ENCODE measurements at regions of chr1 and their contacts with region 1.

Region 1: GRCh38 chr1:25997828-25998761 is at the start of gene PAFAH2:
- DNase-seq: peak; percentile 99
- ATAC-seq: peak; percentile 98
- H3K4me3 ChIP-seq: peak within 1 kb of the TSS; percentile 65 to 90 (median 83)
- H3K4me3 Mint-ChIP-seq: peak within 1 kb of the TSS; percentile 95
- H3K27ac ChIP-seq: peak within 1 kb of the TSS; percentile 77 to 91
- H3K27ac Mint-ChIP-seq: peak within 1 kb of the TSS; percentile 93
- H3K4me1 ChIP-seq: peaks cover 13 to 17% of the 10 kb centered on the region in 2 donors
- H3K4me1 Mint-ChIP-seq: peaks cover 20% of the 10 kb centered on the region
- H3K27me3 ChIP-seq: no peaks in the 10 kb centered on the region
- H3K27me3 Mint-ChIP-seq: no peaks in the 10 kb centered on the region
- CTCF ChIP-seq: peak; percentile 87
- total RNA-seq, gene PAFAH2: 8.8 and 10.8 TPM in 2 replicates

Region 2: DNA sequence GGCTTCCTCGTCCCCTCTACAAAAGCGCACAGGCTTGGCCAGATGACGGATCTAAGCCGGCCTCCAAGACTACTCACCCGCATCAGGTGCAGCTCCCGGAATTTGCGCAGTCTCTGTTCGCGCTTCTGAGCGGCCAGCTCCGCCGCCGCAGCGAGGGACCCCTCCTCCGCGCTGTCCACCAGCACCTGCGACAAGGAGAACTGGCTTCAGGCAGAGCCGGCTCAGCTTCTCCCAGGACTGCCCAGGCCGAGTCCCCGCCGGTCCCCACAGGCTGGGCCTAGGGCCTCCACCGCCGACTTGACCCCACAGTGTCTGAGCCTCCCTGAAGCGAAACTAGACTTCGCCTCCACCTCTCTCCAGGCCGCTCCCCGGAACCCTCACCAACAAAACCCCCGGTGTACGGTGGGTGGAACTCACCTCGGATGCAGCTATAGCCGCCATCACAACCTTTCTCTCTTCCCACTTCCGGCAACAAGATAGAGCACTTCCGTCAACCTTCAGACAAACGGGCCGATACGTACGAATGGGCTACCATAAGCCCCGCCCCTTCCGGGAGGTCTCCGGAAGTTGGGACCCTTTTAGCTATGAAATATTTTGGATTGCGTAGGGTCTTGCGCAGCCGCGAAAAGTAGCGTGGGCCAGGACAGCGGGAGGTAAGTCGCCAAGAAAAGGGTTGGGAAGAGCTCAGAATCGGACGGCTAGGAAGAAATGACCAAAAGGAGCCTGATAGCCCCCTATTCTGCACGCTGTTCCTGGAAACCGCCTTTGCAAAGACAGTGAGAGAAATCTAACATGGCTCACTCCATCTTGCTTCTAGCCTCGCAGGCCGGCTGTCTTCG is 765.8 kb before region 1 on chr1 and contains the start of gene SYF2:
- CTCF ChIA-PET with region 1: no interaction called
- POLR2A ChIA-PET with region 1: no interaction called
- intact Hi-C with region 1: loop called (anchors 2 kb)
- DNase-seq: peak; percentile 94
- ATAC-seq: peak; percentile 84
- H3K4me3 ChIP-seq: peak within 1 kb of the TSS; percentile 81 to 99 (median 95)
- H3K4me3 Mint-ChIP-seq: no peak within 1 kb of the TSS
- H3K27ac ChIP-seq: peak within 1 kb of the TSS; percentile 91 to 96
- H3K27ac Mint-ChIP-seq: no peak within 1 kb of the TSS
- H3K4me1 ChIP-seq: peaks cover 25 to 35% of the 10 kb centered on the region in 2 donors
- H3K4me1 Mint-ChIP-seq: peaks cover 31% of the 10 kb centered on the region
- H3K27me3 ChIP-seq: no peaks in the 10 kb centered on the region
- H3K27me3 Mint-ChIP-seq: no peaks in the 10 kb centered on the region
- CTCF ChIP-seq: no peak
- total RNA-seq, gene SYF2: 57.4 and 67.3 TPM in 2 replicates

Region 3: GRCh38 chr1:25837262-25837875 is 160.7 kb before region 1 on chr1:
- CTCF ChIA-PET with region 1: interaction called, 5 read pairs
- POLR2A ChIA-PET with region 1: interaction called, 3 read pairs
- intact Hi-C with region 1: loop called (anchors 1 kb)
- DNase-seq: no peak
- ATAC-seq: no peak
- H3K4me3 ChIP-seq: no peak overlapping the region
- H3K4me3 Mint-ChIP-seq: no peak overlapping the region
- H3K27ac ChIP-seq: no peak overlapping the region
- H3K27ac Mint-ChIP-seq: no peak overlapping the region
- H3K4me1 ChIP-seq: no peaks in the 10 kb centered on the region
- H3K4me1 Mint-ChIP-seq: no peaks in the 10 kb centered on the region
- H3K27me3 ChIP-seq: no peaks in the 10 kb centered on the region
- H3K27me3 Mint-ChIP-seq: no peaks in the 10 kb centered on the region
- CTCF ChIP-seq: peak; percentile 25

Region 4: DNA sequence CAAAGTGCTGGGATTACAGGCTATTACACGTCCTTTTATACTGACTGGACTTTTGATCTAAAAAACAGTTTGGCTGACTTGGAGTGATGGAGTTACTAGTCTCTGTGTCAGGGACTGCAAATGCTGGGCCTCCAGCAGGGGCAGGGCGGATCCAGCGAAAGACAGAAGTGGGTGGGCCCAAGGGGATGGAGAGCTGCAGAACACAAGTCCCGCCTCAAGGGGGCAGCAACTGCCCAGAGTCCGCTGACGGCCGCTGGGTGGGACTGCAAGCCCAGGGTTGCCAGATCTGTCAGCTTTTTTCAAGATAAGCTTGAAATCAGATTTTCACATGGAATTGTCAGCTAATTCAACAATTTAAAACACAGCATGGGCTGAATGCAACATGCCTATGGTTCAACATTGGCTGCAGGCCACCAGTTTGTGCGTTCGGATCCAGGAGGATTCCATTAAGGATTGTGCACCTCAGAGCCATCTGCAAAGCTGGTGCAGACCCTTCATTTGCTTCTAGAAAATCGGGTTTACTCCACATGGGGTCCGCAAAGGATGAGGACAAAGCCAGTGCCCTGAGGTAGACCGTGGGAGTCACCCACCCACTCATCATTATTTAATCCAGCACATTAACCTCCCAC is 102.6 kb before region 1 on chr1:
- CTCF ChIA-PET with region 1: interaction called, 210 read pairs
- POLR2A ChIA-PET with region 1: interaction called, 10 read pairs
- intact Hi-C with region 1: loop called (anchors 1 kb)
- DNase-seq: peak; percentile 94
- ATAC-seq: peak; percentile 100
- H3K4me3 ChIP-seq: no peak overlapping the region
- H3K4me3 Mint-ChIP-seq: no peak overlapping the region
- H3K27ac ChIP-seq: no peak overlapping the region
- H3K27ac Mint-ChIP-seq: peak overlapping the region; percentile 27
- H3K4me1 ChIP-seq: peaks cover 0 to 12% of the 10 kb centered on the region in 2 donors
- H3K4me1 Mint-ChIP-seq: peaks cover 9% of the 10 kb centered on the region
- H3K27me3 ChIP-seq: no peaks in the 10 kb centered on the region
- H3K27me3 Mint-ChIP-seq: no peaks in the 10 kb centered on the region
- CTCF ChIP-seq: peak; percentile 99

Region 5: DNA sequence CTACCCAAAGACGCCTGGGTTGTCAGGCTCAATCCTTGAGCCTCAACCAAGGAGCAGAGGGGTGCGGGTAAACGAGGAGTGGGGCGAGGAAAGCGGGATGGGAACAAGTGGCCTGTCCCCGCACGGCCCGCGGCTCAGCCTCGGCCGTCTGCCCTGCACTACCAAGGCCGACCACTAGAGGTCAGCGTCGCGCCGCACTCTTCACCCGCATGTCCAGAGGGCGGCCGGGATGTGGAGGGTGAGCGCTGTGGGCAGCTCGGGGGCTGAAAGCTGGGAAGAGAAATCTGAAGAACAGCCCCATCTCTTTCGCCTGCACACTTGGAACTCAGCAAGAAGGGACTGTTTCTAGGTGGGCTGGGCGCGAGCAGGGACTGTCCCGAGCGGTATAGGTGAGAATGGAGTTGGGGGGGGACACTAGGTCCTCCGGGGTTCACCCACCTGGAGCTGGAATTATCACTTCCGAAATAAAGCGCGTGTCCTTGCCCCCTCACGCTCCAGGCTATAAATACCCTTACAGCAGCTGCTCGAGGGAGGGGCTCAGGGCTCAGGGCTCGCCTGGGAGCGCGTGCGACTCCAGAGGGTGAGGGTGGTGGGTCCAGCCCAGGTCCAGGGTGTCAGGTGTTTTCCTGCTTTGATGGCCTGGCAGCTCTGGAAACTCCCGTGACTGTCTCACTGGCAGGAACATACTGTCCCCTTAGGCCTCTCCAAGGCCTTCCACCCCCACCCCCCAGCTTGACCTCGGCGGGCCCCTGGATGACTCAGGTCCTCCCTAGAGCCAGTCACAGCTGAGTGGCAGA is 38.1 kb after region 1 on chr1:
- CTCF ChIA-PET with region 1: interaction called, 3 read pairs
- POLR2A ChIA-PET with region 1: no interaction called
- intact Hi-C with region 1: loop called (anchors 1 kb)
- DNase-seq: peak; percentile 88
- ATAC-seq: peak; percentile 74
- H3K4me3 ChIP-seq: peak overlapping the region; percentile 41 to 96 (median 95)
- H3K4me3 Mint-ChIP-seq: peak overlapping the region; percentile 96
- H3K27ac ChIP-seq: peak overlapping the region in 1 of 2 donors; percentile 67
- H3K27ac Mint-ChIP-seq: peak overlapping the region; percentile 89
- H3K4me1 ChIP-seq: peaks cover 10 to 13% of the 10 kb centered on the region in 2 donors
- H3K4me1 Mint-ChIP-seq: peaks cover 13% of the 10 kb centered on the region
- H3K27me3 ChIP-seq: peaks cover 0 to 22% (median 4%) of the 10 kb centered on the region in 4 experiments
- H3K27me3 Mint-ChIP-seq: peaks cover 6% of the 10 kb centered on the region
- CTCF ChIP-seq: peak; percentile 99